Motor neuron (in vitro differentiated cells): ENCODE measurements at regions of chr15 and their contacts with region 1.

Region 1: GRCh38 chr15:101251830-101252820 is at the start of gene CHSY1:
- ATAC-seq: peak; percentile 71 to 87 (median 84)
- H3K4me3 ChIP-seq: peak within 1 kb of the TSS; percentile 87 to 100 (median 89)
- H3K27ac ChIP-seq: peak within 1 kb of the TSS; percentile 84 to 85
- H3K4me1 ChIP-seq: peaks cover 20 to 30% of the 10 kb centered on the region in 2 donors
- total RNA-seq, gene CHSY1: 14.2 to 59.5 (median 20.7) TPM

Region 2: GRCh38 chr15:100602064-100602822 is 649.9 kb before region 1 on chr15 and contains the starts of genes ASB7 and LINS1:
- in situ Hi-C with region 1: loop called in 3 of 9 experiments (anchors 25 kb)
- ATAC-seq: peak; percentile 85 to 95 (median 94)
- H3K4me3 ChIP-seq: peak within 1 kb of the TSS; percentile 67 to 83 (median 75)
- H3K27ac ChIP-seq: peak within 1 kb of the TSS; percentile 61 to 72
- H3K4me1 ChIP-seq: peaks cover 2 to 4% of the 10 kb centered on the region in 2 donors
- total RNA-seq, gene ASB7: 6.7 to 17.9 (median 10.6) TPM
- total RNA-seq, gene LINS1: 12.1 to 42.4 (median 14.0) TPM

Region 3: DNA sequence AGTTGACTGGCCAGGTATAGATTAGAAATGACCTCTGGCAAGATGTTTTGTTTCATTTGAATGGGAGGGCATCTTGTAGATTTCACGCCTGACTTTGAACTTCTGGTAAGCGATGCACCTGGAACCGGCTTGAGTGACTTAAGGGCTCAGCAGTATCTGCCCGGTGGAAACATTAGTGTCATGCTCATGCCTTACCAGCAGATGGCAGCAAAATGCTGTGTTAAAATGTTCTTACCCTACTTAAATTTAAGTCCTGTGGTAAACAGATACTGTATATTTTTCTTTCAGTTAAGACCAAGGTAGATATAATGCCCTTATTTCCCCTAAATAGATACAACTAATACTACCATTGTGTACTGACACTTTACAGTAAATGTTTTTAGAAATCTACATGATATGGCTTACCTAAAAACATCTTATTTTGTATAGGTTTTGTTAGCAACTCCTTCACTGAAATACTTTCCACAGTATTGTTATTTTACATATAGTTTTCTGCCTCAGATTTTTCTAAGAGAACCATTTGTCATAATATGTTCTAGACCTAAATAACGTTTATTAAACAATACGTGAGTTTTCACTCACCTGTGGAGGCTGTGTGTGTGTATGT is 624.2 kb before region 1 on chr15:
- in situ Hi-C with region 1: loop called in 5 of 9 experiments (anchors 25 kb)
- ATAC-seq: peak; percentile 59 to 83 (median 68)
- H3K4me3 ChIP-seq: no peak overlapping the region
- H3K27ac ChIP-seq: no peak overlapping the region
- H3K4me1 ChIP-seq: no peaks in the 10 kb centered on the region

Region 4: GRCh38 chr15:101014921-101015841 is 236.9 kb before region 1 on chr15:
- in situ Hi-C with region 1: loop called in 8 of 9 experiments (anchors 5 to 10 kb)
- ATAC-seq: peak; percentile 70 to 89 (median 82)
- H3K4me3 ChIP-seq: no peak overlapping the region
- H3K27ac ChIP-seq: no peak overlapping the region
- H3K4me1 ChIP-seq: peaks cover 11 to 13% of the 10 kb centered on the region in 2 donors

Region 5: DNA sequence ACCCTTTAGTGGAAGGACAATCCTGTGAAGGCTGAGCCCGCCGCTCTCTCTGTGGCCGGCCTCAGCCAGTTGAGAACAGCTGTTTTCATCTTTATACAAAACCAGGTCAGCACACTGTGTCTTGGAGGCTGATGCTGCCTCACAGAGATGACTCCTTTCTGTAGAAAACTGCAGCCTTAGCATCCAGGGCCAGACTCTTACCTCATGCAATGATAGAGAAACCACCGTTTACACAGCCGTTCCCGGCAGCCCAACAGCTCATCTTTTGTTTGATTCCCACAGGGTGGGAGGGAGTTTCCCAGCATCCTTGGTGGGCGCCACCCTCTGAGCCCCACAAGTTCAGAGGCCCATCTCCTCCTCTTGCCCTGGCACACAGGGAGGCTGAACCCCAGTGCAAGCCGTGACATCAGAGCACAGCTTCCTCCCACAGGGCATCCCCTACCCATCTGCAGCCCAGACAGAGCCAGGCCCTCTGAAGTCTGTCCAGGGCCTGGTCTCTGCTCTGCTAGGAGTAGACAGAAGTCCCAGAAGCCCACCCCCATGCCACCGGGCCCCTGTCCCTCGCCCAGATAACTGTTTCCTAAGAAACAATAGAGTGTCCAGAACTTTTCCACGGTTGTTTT is 227.9 kb before region 1 on chr15:
- in situ Hi-C with region 1: loop called in 7 of 9 experiments (anchors 5 to 10 kb)
- ATAC-seq: peak in 7 of 8 experiments; percentile 23 to 97 (median 95)
- H3K4me3 ChIP-seq: no peak overlapping the region
- H3K27ac ChIP-seq: peak overlapping the region; percentile 59 to 80
- H3K4me1 ChIP-seq: peaks cover 39 to 40% of the 10 kb centered on the region in 2 donors

Region 6: GRCh38 chr15:101088788-101089583 is 163.1 kb before region 1 on chr15:
- in situ Hi-C with region 1: loop called in 3 of 9 experiments (anchors 5 to 10 kb)
- ATAC-seq: peak in 5 of 8 experiments; percentile 23 to 99 (median 81)
- H3K4me3 ChIP-seq: no peak overlapping the region
- H3K27ac ChIP-seq: no peak overlapping the region
- H3K4me1 ChIP-seq: peaks cover 20 to 36% of the 10 kb centered on the region in 2 donors